CD14-positive monocyte (primary cell): ENCODE measurements at regions of chr21 and their contacts with region 1.

Region 1: DNA sequence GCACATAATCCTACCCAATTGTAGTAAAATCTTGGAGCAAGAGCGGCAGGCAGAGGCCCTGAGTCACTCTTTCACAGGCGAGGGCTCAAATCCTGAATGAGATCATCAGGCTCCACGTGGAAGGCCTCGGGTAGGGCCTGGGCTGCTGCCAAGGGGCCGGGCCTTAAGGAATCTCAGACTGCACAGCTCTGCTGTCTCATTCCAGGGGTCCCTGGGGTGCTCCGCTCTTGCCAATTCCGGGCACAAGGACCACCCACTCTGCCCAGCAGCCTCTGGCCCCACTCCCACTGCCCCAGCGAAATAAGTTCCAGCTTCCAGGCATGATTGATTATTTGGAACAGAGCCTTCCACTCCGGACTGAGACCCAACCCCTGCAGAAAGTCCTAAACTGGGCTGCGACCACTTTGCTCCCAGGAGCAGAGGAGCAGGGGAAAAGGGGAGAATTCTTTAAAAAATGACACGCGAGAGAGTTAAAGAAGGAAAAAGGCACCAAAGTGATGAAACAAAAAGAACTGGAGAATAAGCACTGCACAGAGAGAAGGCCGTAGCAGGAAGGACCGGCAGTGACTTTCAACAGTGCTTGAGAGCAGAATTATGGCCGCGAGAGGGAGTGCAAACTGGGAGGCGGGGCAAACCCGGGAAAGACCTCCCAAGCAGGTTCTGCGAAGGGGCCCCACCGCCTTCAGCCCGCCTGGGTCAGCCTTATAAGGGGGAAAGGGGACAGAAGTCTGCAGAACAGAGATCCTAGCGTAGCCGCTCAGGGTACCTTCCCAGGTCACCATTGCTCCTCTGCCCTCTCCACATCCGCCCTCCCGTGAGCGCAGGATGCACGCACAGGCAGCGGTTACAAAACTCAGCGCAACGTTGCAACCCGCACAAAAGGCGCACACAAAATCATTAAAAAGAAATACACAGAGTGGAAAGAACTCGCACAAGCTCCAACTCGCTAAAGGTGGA is 2.0 kb downstream of the ADAMTS1 start:
- DNase-seq: no peak
- H3K4me3 ChIP-seq: peak overlapping the region in 1 of 3 experiments; percentile 59
- H3K4me3 Mint-ChIP-seq: peak overlapping the region; percentile 34 to 90
- H3K27ac ChIP-seq: no peak overlapping the region
- H3K27ac Mint-ChIP-seq: no peak overlapping the region
- H3K4me1 ChIP-seq: peaks cover 38 to 41% of the 10 kb centered on the region in 2 donors
- H3K4me1 Mint-ChIP-seq: peaks cover 36% of the 10 kb centered on the region
- H3K27me3 ChIP-seq: peaks cover 55 to 60% of the 10 kb centered on the region in 2 donors
- H3K27me3 Mint-ChIP-seq: peaks cover 59 to 61% (median 61%) of the 10 kb centered on the region in 3 donors
- CTCF ChIP-seq: no peak

Region 2: DNA sequence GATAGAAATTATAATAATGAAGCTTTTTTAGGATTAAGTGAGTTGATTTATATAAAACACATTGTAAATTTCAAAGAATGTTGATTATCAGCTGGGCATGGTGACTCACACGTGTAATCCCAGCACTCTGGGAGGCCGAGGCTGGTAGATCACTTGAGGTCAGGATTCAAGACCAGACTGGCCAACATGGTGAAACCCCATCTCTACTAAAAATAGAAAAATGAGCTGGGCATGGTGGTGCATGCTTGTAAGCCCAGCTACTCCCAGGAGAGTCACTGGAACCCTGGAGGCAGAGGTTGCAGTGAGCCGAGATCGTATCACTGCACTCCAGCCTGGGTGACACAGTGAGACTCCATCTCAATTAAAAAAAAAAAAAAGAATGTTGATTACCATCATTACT is 16.5 kb before region 1 on chr21:
- intact Hi-C with region 1: no loop called
- DNase-seq: no peak
- H3K4me3 ChIP-seq: no peak overlapping the region
- H3K4me3 Mint-ChIP-seq: no peak overlapping the region
- H3K27ac ChIP-seq: no peak overlapping the region
- H3K27ac Mint-ChIP-seq: no peak overlapping the region
- H3K4me1 ChIP-seq: no peaks in the 10 kb centered on the region
- H3K4me1 Mint-ChIP-seq: no peaks in the 10 kb centered on the region
- H3K27me3 ChIP-seq: no peaks in the 10 kb centered on the region
- H3K27me3 Mint-ChIP-seq: no peaks in the 10 kb centered on the region
- CTCF ChIP-seq: no peak

Region 3: DNA sequence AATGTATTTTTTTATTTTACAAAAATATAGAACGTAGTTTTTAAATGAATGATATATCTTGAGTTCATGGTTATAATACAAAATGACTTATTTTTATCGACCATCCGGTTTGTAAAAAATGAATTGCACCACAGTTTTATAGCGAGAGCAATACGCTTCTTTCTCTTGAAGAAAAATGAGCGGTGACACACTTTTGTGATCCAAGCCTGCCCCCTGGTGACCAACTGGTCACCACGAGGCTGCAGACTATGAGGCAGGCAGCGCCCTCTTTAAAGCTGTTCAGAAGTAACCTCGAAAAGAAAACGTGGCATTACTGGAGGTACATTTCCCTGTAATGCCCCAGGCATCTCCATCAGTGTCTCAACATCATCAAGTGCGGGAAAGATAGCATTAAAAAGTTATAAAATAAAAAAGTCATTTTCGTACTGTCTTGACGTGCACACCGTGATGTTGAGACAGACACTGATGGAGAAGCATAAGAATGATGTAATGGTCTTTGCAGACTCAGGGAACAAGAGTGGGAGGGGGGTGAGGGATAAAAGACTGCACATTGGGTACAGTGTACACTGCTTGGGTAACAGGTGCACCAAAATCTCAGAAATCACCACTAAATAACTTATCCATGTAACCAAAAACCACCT is 857.8 kb after region 1 on chr21:
- intact Hi-C with region 1: loop called in 1 of 2 experiments (anchors 5 kb)
- DNase-seq: peak; percentile 31 to 47 (median 33)
- H3K4me3 ChIP-seq: no peak overlapping the region
- H3K4me3 Mint-ChIP-seq: no peak overlapping the region
- H3K27ac ChIP-seq: no peak overlapping the region
- H3K27ac Mint-ChIP-seq: no peak overlapping the region
- H3K4me1 ChIP-seq: no peaks in the 10 kb centered on the region
- H3K4me1 Mint-ChIP-seq: no peaks in the 10 kb centered on the region
- H3K27me3 ChIP-seq: peaks cover 0 to 3% of the 10 kb centered on the region in 2 donors
- H3K27me3 Mint-ChIP-seq: peaks cover 2 to 4% (median 3%) of the 10 kb centered on the region in 3 donors
- CTCF ChIP-seq: peak; percentile 71

Region 4: DNA sequence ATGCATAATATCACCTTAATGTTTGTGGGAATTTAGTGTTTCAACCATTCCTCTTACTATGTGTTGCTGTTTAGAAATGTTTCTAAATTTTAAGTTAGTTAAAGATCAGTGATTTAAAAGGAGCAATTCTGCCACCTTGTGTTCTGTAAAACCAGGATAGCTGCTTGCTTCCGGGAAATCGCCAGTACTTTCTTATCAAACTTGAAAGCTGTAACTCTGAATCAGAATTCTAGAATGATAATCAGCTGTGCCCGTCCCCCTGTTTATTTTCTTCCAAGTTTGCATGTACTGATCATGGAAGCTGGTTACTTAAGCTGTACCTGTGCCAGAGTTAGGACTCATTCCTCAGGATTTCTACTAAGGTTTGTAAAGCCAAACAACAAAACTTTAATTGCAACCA is 1493.1 kb after region 1 on chr21:
- intact Hi-C with region 1: loop called (anchors 5 to 10 kb)
- DNase-seq: peak in 2 of 3 donors; percentile 2 to 4
- H3K4me3 ChIP-seq: no peak overlapping the region
- H3K4me3 Mint-ChIP-seq: no peak overlapping the region
- H3K27ac ChIP-seq: no peak overlapping the region
- H3K27ac Mint-ChIP-seq: no peak overlapping the region
- H3K4me1 ChIP-seq: no peaks in the 10 kb centered on the region
- H3K4me1 Mint-ChIP-seq: no peaks in the 10 kb centered on the region
- H3K27me3 ChIP-seq: peaks cover 0 to 2% of the 10 kb centered on the region in 2 donors
- H3K27me3 Mint-ChIP-seq: peaks cover 0 to 1% (median 0%) of the 10 kb centered on the region in 3 donors
- CTCF ChIP-seq: no peak